GM18951 (cell line): ENCODE measurements at regions of chr7 and their contacts with region 1.

Region 1: GRCh38 chr7:130010689-130011412 is 40.3 kb downstream of the ZC3HC1 start:
- POLR2A ChIP-seq: no peak

Region 2: GRCh38 chr7:129367700-129368388 is 643.0 kb before region 1 on chr7:
- in situ Hi-C with region 1: loop called (anchors 25 kb)
- POLR2A ChIP-seq: no peak

Region 3: DNA sequence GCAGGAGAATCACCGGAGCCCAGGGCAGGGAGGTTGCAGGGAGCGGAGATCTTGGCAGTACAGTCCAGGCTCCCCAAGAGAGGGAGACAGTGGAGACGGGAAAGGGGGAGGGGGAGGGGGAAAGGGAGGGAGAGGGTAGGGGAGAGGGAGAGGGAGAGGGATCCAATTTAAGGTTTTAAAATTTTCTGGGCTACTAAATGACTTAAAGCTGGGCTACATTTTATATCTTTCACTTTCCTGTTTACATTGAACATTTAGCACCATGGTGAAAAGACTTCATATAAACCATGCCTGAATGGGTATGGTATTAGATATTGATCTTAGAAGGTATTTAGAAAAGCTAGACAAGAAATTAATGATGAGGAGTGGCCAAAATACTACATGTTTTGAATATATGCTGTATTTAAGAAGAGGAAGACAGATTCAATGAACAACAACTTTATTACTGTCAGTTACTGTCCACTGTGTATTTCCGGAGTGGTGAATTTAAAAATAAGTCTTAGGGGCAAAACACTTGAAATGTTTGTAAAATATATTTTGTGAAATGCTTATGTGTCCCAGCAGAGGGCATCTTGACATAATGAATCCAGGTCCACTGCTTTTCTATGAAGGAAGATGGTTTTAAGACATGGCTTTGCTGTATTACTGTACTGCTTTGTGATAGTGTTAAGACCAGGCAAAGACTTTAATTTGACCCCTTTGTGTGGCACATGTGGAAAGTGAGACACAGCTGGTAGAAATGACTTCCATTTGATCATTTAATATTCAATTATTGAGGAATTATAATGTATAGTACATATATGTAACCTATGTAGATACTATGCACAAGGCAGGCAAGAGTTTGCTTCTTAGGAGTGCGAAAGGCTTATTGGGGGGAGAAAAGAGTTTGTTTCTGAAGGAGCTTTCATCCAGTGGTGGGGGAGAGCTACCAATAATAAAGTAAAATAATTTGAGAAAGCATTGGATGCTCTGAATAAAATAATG is 346.5 kb before region 1 on chr7:
- in situ Hi-C with region 1: loop called (anchors 25 kb)
- POLR2A ChIP-seq: no peak

Region 4: GRCh38 chr7:129825496-129826267 is 185.2 kb before region 1 on chr7:
- in situ Hi-C with region 1: loop called (anchors 5 kb)
- POLR2A ChIP-seq: no peak